ENCODE measurements at regions of chr1 and their contacts with region 1.

Region 1: DNA sequence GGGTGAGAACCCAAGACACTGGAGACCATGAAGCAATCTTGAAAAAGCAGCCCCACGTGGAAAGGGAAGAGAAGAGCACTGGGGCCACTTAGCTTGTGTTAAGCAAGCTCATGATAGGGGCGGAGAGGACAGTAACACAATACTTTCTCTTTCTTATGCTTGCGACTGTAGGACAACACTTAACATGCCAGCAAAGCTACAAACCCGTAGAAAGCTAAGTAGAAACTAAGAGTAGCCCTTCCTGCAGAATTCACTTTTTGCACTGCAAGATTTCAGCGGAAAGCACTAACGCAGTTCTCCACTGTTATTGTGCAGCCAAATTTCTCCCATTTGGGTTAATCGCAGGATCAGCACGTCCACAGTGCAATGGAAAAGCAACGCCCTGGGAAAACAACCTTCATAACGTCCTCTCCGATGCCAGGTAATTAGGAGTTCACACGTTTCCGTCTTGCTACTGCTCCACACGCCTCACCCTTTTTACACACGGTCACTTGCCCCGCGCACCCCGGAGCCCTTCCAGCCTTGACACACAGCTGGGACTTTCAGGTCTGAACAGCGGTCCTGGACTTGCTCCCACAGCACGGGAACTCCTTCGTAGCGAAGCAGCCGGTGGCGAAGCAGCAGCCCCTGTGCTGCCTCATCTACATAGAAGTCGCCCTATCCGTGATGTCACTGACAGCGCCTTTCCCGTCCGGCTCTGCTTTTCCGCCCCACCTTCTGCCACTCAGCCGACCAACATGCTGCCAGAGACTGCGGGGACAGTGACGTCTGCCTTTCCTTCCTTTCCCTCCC is 148.6 kb downstream of the PPIAL4G start:
- DNase-seq: peak; percentile 92
- H3K4me3 Mint-ChIP-seq: peak overlapping the region; percentile 93
- H3K27ac Mint-ChIP-seq: peak overlapping the region; percentile 99
- H3K4me1 Mint-ChIP-seq: peaks cover 30% of the 10 kb centered on the region
- H3K27me3 Mint-ChIP-seq: peaks cover 47% of the 10 kb centered on the region

Region 2: GRCh38 chr1:147084273-147085096 is 1250.0 kb before region 1 on chr1:
- intact Hi-C with region 1: loop called (anchors 5 kb)
- DNase-seq: peak; percentile 92
- H3K4me3 Mint-ChIP-seq: peak overlapping the region; percentile 87
- H3K27ac Mint-ChIP-seq: peak overlapping the region; percentile 100
- H3K4me1 Mint-ChIP-seq: peaks cover 28% of the 10 kb centered on the region
- H3K27me3 Mint-ChIP-seq: peaks cover 76% of the 10 kb centered on the region

Region 3: GRCh38 chr1:147242439-147243227 is 1091.9 kb before region 1 on chr1 and contains the start of gene CHD1L:
- intact Hi-C with region 1: loop called (anchors 10 kb)
- DNase-seq: peak; percentile 98
- H3K4me3 Mint-ChIP-seq: peak within 1 kb of the TSS; percentile 84
- H3K27ac Mint-ChIP-seq: peak within 1 kb of the TSS; percentile 88
- H3K4me1 Mint-ChIP-seq: peaks cover 34% of the 10 kb centered on the region
- H3K27me3 Mint-ChIP-seq: peaks cover 8% of the 10 kb centered on the region
- total RNA-seq, gene CHD1L: 72.9 and 80.3 TPM in 2 replicates

Region 4: DNA sequence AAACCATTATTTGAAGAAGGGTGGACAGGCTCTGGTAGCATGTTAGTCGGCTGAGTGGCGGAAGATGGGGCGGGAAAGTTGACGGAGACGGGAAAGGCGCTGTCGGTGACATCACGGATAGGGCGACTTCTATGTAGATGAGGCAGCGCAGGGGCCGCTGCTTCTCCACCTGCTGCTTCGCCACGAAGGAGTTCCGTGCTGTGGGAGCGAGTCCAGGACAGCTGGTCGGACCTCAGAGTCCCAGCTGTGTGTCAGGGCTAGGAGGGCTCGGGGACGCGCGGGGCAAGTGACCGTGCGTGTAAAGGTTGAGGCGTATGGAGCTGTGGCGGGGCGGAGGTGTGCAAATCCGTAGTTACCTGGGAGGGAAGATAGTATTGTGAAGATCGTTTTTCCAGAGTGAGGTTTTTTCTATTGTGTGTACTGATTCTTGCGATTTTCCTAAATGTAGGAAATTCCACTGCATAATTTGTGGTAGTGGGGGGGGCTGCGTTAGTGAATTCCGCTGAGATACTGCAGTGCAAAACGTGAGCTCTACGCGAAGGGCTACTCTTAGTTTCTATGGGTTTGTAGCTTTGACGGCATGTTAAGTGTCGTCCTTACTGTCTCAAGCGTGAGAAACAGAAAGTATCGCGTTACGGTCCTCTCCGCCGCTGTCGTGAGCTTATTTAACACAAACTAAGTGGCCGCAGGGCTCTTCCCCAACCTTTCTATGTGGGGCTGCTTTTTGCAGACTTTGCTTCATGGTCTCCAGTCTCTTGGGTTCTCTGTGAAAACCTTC is 71.2 kb before region 1 on chr1:
- intact Hi-C with region 1: loop called (anchors 2 kb)
- DNase-seq: peak; percentile 85
- H3K4me3 Mint-ChIP-seq: peak overlapping the region; percentile 93
- H3K27ac Mint-ChIP-seq: peak overlapping the region; percentile 92
- H3K4me1 Mint-ChIP-seq: peaks cover 18% of the 10 kb centered on the region
- H3K27me3 Mint-ChIP-seq: peaks cover 30% of the 10 kb centered on the region

Region 5: GRCh38 chr1:148307583-148308190 is 26.8 kb before region 1 on chr1:
- intact Hi-C with region 1: loop called (anchors 5 kb)
- DNase-seq: no peak
- H3K4me3 Mint-ChIP-seq: no peak overlapping the region
- H3K27ac Mint-ChIP-seq: no peak overlapping the region
- H3K4me1 Mint-ChIP-seq: peaks cover 23% of the 10 kb centered on the region
- H3K27me3 Mint-ChIP-seq: peaks cover 40% of the 10 kb centered on the region

Region 6: DNA sequence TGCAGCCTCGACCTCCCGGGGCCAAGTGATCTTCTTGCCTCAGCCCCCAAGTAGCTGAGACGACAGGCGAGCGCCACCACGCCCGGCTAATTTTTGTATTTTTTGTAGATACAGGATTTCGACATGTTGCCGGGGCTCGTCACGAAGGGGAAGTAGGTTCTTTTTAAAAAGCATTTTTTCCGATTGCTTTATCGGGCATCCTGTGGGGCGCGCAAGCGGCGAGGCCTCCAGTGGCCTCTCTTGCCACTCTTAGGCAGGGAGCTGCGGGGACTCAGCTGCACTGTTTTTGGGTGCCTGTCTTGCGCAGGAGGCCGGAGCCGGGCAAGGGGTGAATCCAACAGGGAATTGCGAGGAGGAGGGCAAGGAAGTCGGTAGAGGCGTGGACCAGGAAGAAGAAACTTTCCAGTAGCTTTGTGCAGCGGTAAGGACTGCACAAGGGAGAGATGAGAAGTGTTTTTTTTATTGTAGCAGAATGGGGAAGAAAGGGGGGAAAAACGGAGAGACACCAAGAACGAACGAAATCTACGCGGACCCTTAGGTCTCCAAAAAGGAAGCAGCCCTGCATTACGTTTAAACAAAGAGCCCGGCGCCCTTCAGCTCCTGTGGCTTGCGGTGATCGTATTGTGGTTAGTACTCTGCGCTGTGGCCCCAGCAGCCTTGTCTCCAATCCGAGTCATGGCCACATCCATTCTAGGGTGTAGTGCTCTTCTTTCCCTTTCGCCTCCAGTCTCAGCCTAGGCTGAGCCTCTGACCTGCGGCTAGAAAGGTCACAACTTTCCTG is 16.2 kb before region 1 on chr1:
- intact Hi-C with region 1: loop called (anchors 2 kb)
- DNase-seq: peak; percentile 93
- H3K4me3 Mint-ChIP-seq: peak overlapping the region; percentile 93
- H3K27ac Mint-ChIP-seq: peak overlapping the region; percentile 88
- H3K4me1 Mint-ChIP-seq: peaks cover 36% of the 10 kb centered on the region
- H3K27me3 Mint-ChIP-seq: peaks cover 44% of the 10 kb centered on the region

Region 7: GRCh38 chr1:148352470-148353261 is 18.1 kb after region 1 on chr1:
- intact Hi-C with region 1: no loop called
- DNase-seq: no peak
- H3K4me3 Mint-ChIP-seq: no peak overlapping the region
- H3K27ac Mint-ChIP-seq: no peak overlapping the region
- H3K4me1 Mint-ChIP-seq: peaks cover 4% of the 10 kb centered on the region
- H3K27me3 Mint-ChIP-seq: peaks cover 86% of the 10 kb centered on the region

Region 8: GRCh38 chr1:148388260-148389027 is 53.9 kb after region 1 on chr1:
- intact Hi-C with region 1: loop called (anchors 5 kb)
- DNase-seq: peak; percentile 96
- H3K4me3 Mint-ChIP-seq: peak overlapping the region; percentile 97
- H3K27ac Mint-ChIP-seq: peak overlapping the region; percentile 100
- H3K4me1 Mint-ChIP-seq: peaks cover 36% of the 10 kb centered on the region
- H3K27me3 Mint-ChIP-seq: no peaks in the 10 kb centered on the region